ENCODE measurements at regions of chr2 and their contacts with region 1.

Region 1: DNA sequence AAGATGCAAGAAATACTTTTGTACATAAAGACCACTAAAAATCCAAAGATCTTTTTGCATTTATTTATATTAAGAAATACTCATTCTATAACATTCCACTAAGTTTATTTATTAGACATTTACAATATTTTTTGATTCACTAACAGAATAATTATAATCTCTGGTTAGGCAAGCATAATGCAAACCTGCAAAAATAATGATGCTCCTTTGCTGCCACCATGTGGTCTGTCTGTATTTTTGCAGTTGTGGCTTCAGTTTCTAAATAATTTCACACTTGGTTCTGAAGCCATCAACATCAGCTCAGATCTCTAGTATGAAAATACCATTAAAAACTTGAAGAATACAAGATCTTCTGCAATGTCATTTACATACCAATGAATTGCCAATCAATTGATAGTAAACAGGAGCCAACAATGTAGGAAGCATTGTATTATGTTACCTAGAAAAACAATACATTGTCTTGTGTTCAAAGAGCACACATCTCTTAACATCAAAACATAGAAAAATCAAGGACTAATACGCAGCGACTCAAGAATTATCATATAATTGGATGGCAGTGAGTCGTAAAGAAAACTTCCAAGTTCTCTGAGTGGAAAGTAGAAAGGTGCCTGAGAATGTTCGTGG is 28.8 kb upstream of the WDR75 start:
- DNase-seq: peak; percentile 72
- H3K4me3 ChIP-seq: no peak overlapping the region
- H3K27ac ChIP-seq: no peak overlapping the region
- H3K4me1 ChIP-seq: peaks cover 28% of the 10 kb centered on the region
- H3K27me3 ChIP-seq: no peaks in the 10 kb centered on the region
- CTCF ChIP-seq: peak; percentile 23 to 37
- POLR2A ChIP-seq: no peak

Region 2: GRCh38 chr2:188512456-188512855 is 900.0 kb before region 1 on chr2:
- CTCF ChIA-PET with region 1: interaction called, 11 read pairs
- POLR2A ChIA-PET with region 1: no interaction called
- dilution Hi-C with region 1: no loop called
- intact Hi-C with region 1: no loop called
- DNase-seq: peak; percentile 69
- H3K4me3 ChIP-seq: no peak overlapping the region
- H3K27ac ChIP-seq: no peak overlapping the region
- H3K4me1 ChIP-seq: peaks cover 2% of the 10 kb centered on the region
- H3K27me3 ChIP-seq: no peaks in the 10 kb centered on the region
- CTCF ChIP-seq: peak; percentile 9 to 32
- POLR2A ChIP-seq: no peak

Region 3: GRCh38 chr2:188978291-188979081 is 434.0 kb before region 1 on chr2:
- CTCF ChIA-PET with region 1: interaction called, 19 read pairs
- POLR2A ChIA-PET with region 1: no interaction called
- dilution Hi-C with region 1: no loop called
- intact Hi-C with region 1: loop called (anchors 2 kb)
- DNase-seq: peak; percentile 86
- H3K4me3 ChIP-seq: peak overlapping the region in 1 of 3 experiments; percentile 13
- H3K27ac ChIP-seq: peak overlapping the region; percentile 12
- H3K4me1 ChIP-seq: peaks cover 23% of the 10 kb centered on the region
- H3K27me3 ChIP-seq: no peaks in the 10 kb centered on the region
- CTCF ChIP-seq: peak; percentile 16 to 25
- POLR2A ChIP-seq: no peak

Region 4: GRCh38 chr2:189115126-189115525 is 297.3 kb before region 1 on chr2:
- CTCF ChIA-PET with region 1: interaction called, 22 read pairs
- POLR2A ChIA-PET with region 1: no interaction called
- dilution Hi-C with region 1: no loop called
- intact Hi-C with region 1: loop called (anchors 1 kb)
- DNase-seq: peak; percentile 50
- H3K4me3 ChIP-seq: no peak overlapping the region
- H3K27ac ChIP-seq: no peak overlapping the region
- H3K4me1 ChIP-seq: no peaks in the 10 kb centered on the region
- H3K27me3 ChIP-seq: no peaks in the 10 kb centered on the region
- CTCF ChIP-seq: no peak
- POLR2A ChIP-seq: no peak

Region 5: GRCh38 chr2:189191766-189192165 is 220.7 kb before region 1 on chr2:
- CTCF ChIA-PET with region 1: no interaction called
- POLR2A ChIA-PET with region 1: no interaction called
- dilution Hi-C with region 1: no loop called
- intact Hi-C with region 1: no loop called
- DNase-seq: no peak
- H3K4me3 ChIP-seq: no peak overlapping the region
- H3K27ac ChIP-seq: no peak overlapping the region
- H3K4me1 ChIP-seq: no peaks in the 10 kb centered on the region
- H3K27me3 ChIP-seq: no peaks in the 10 kb centered on the region
- CTCF ChIP-seq: no peak
- POLR2A ChIP-seq: no peak

Region 6: DNA sequence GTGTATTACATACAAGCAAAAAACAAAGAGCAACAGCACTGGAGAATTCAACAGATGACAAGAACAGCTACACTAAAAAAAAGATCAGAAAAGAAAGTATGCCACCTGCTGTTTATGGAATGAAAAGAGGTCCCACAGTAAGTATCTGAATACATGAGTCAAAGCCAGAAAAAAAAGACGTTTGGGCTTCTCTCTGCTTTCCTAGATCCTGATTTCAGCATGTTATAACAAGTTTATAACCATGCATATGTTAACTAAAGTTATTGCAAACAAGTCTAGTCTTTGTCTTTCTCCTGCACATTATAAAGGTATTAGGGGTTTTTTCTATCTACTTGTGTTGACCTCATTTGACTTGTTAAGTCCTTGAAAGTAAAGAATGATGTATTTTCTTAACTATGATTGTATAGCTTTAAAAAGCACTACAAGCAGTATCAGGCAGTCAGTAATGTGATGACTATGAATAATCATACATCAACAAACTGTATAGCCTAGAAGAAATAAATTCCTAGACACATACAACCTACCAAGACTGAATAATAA is 124.4 kb before region 1 on chr2:
- CTCF ChIA-PET with region 1: interaction called, 40 read pairs
- POLR2A ChIA-PET with region 1: no interaction called
- dilution Hi-C with region 1: no loop called
- intact Hi-C with region 1: loop called (anchors 1 kb)
- DNase-seq: peak; percentile 82
- H3K4me3 ChIP-seq: no peak overlapping the region
- H3K27ac ChIP-seq: no peak overlapping the region
- H3K4me1 ChIP-seq: peaks cover 6% of the 10 kb centered on the region
- H3K27me3 ChIP-seq: no peaks in the 10 kb centered on the region
- CTCF ChIP-seq: peak; percentile 41
- POLR2A ChIP-seq: no peak

Region 7: DNA sequence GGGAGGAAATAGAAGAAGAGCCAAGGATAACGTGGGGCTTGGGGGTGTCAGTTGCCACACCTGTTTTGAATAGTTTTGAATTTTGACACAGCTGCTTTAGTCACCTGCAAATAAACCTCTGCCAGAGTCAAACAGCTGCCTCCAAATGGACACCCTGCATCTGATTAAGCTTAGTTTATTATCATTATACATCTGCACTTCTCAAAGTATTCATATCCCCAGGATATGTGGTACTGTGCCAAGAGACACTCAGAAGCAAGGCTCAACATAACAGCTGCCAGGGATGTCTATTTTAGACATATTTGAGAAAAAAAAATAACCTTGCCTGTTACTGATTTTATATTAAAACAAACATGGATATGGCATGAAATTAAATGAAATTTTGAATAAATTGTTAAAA is 93.7 kb before region 1 on chr2:
- CTCF ChIA-PET with region 1: no interaction called
- POLR2A ChIA-PET with region 1: no interaction called
- dilution Hi-C with region 1: no loop called
- intact Hi-C with region 1: no loop called
- DNase-seq: no peak
- H3K4me3 ChIP-seq: no peak overlapping the region
- H3K27ac ChIP-seq: no peak overlapping the region
- H3K4me1 ChIP-seq: no peaks in the 10 kb centered on the region
- H3K27me3 ChIP-seq: no peaks in the 10 kb centered on the region
- CTCF ChIP-seq: no peak
- POLR2A ChIP-seq: no peak